ENCODE measurements at regions of chr7 and their contacts with region 1.

Region 1: DNA sequence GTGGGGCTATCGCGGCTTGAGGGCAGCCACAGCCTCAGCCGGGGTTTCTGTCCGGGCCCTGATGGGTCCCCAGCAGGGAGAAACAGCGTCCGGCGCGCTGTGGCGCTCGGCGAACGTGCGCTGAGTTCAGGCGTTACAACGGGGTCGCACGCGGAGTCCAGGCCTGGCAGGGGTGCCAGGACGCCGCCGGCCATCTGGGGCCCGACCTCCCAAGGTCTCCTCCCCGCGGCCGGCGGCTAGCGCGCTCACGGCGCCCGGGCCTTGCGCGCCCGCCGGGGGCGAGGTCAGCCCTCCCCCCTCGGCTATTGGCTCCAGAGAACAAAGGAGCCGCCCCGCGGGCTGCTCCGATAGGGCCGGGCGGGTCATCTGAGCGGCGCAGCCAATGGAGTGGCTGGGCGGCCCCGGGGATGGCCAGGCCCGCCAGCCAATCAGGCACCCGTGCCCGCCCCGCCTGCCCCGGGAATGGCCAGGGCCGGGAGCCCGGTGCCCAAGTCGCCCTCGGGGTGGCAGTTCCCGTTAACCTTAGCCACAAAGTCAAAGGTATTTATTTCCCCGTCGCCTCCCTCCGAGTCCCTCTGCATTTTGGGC is at the start of gene ZNF775:
- DNase-seq: peak; percentile 98 to 100 (median 100)
- ATAC-seq: peak; percentile 98
- H3K4me3 ChIP-seq: peak within 1 kb of the TSS; percentile 96
- H3K27ac ChIP-seq: peak within 1 kb of the TSS; percentile 73
- H3K4me1 ChIP-seq: peaks cover 34 to 54% of the 10 kb centered on the region in 2 experiments
- H3K27me3 ChIP-seq: no peaks in the 10 kb centered on the region
- CTCF ChIP-seq: peak in 2 of 3 experiments; percentile 9 to 14; a peak in 1 of 6 replicates
- EP300 ChIP-seq: no peak
- POLR2A ChIP-seq: peak; percentile 93
- RAD21 ChIP-seq: peak; percentile 3 to 6; a peak in 1 of 4 replicates
- polyA plus RNA-seq, gene ZNF775: 0.04 to 0.20 TPM

Region 2: DNA sequence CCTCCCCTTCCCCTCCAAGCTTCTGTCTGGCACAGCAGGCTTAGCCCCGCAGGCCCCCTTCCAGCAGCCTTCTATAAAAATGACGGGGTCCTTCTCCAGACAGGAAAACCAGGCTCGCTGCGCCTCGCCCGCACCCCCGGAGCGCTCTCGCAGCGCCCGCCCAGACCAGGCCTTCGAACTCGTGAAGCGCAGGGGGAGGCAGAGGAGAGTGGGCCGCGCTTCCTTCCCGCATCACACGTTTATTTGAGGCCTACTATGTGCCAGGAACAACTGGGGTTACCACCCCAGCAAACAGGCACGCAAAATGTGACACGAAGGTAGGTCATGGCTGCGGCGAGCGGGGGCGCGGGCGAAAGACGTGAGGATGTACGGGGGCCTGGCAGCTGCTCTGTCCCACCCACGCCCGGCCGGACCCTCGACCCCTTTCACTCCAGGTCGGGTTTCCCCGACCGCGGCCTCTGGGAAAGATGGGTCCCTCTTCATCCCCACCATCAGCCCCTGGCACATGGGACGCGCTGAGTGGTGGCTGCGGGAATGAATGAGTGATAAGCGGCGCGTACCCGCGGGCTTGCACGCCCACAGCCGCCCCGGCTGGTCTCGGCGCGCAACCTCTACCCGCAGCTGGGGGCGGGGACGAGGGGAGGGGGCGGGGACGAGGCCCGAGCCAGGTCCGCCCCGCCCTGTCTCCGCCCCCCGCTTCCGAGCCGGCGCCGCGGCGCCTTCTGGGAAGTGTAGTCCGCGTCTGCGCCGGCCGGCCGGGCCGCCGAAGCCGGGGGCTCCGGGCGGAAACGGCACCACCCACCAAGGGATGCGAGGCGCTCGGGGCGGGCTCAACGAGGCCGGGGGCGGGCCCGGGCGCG is 664.7 kb before region 1 on chr7:
- CTCF ChIA-PET with region 1: no interaction called
- POLR2A ChIA-PET with region 1: no interaction called
- in situ Hi-C with region 1: no loop called
- intact Hi-C with region 1: loop called (anchors 2 kb)
- DNase-seq: peak; percentile 98 to 100 (median 100)
- ATAC-seq: peak; percentile 89
- H3K4me3 ChIP-seq: peak overlapping the region; percentile 60
- H3K27ac ChIP-seq: peak overlapping the region; percentile 46
- H3K4me1 ChIP-seq: peaks cover 31 to 50% of the 10 kb centered on the region in 2 experiments
- H3K27me3 ChIP-seq: no peaks in the 10 kb centered on the region
- CTCF ChIP-seq: no peak
- EP300 ChIP-seq: no peak
- POLR2A ChIP-seq: no peak; the same call in 1 of the 2 replicates
- RAD21 ChIP-seq: no peak

Region 3: GRCh38 chr7:150356265-150356897 is 22.6 kb before region 1 on chr7:
- CTCF ChIA-PET with region 1: interaction called, 3 read pairs
- POLR2A ChIA-PET with region 1: interaction called, 3 read pairs
- in situ Hi-C with region 1: no loop called
- intact Hi-C with region 1: loop called (anchors 2 kb)
- DNase-seq: peak; percentile 69 to 76 (median 70)
- ATAC-seq: peak; percentile 52
- H3K4me3 ChIP-seq: no peak overlapping the region
- H3K27ac ChIP-seq: no peak overlapping the region
- H3K4me1 ChIP-seq: peaks cover 30 to 34% of the 10 kb centered on the region in 2 experiments; a peak in 4 of 5 replicates
- H3K27me3 ChIP-seq: no peaks in the 10 kb centered on the region; a peak in 1 of 5 replicates
- CTCF ChIP-seq: peak; percentile 79 to 89 (median 89)
- EP300 ChIP-seq: no peak
- POLR2A ChIP-seq: no peak
- RAD21 ChIP-seq: peak; percentile 55 to 66

Region 4: GRCh38 chr7:150368096-150368883 is 10.7 kb before region 1 on chr7 and contains the start of gene REPIN1:
- CTCF ChIA-PET with region 1: no interaction called
- POLR2A ChIA-PET with region 1: interaction called, 30 read pairs
- in situ Hi-C with region 1: no loop called
- intact Hi-C with region 1: no loop called
- DNase-seq: peak; percentile 97 to 99 (median 98)
- ATAC-seq: peak; percentile 76
- H3K4me3 ChIP-seq: peak within 1 kb of the TSS; percentile 79
- H3K27ac ChIP-seq: peak within 1 kb of the TSS; percentile 97
- H3K4me1 ChIP-seq: peaks cover 45 to 51% of the 10 kb centered on the region in 2 experiments
- H3K27me3 ChIP-seq: no peaks in the 10 kb centered on the region
- CTCF ChIP-seq: 0 out of 6 replicates have a peak, but pooled peaks of 1 of the 3 experiments have one; percentile 1
- EP300 ChIP-seq: peak; percentile 56
- POLR2A ChIP-seq: peak; percentile 74
- RAD21 ChIP-seq: peak in 1 of 2 experiments; percentile 5; a peak in 1 of 4 replicates
- polyA plus RNA-seq, gene REPIN1: 8.1 to 11.0 TPM

Region 5: DNA sequence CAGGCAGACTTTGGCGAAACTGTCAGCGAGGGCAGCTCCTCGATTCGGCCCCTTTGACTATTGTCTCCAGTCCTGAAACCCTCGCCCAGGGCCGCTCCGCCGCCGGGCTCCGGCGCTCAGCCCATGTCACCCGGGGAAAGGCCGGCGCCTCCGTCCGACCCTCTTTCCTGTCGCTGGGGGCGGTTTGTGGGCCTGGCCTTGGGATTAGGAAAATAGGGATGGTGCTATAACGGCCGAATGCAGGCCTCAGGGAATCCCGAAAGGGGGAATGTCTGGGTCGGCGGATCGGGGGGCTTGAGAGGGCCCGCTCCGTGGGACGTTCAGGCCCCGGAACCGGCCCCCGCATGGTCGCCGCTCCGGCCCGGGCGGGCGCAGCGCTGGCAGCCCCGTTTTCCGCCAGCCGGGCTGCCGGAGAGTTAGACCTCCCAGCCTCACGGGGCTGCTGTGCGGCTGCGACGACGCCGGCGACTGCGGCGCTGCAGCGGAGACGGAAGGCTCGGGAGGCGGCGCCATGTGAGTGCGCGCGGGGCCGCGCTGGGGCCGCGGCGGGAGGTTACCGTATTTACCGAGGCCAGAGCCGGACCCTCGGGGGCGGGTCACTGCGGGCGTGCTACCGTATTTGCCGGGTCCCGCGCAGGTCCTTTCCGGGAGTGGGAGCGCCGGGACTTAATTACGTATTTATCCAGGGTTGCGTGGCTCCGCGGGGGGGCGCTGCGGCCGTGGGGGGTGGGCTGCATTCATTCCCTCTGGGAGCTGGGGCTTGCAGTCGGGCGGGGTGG is 26.0 kb after region 1 on chr7:
- CTCF ChIA-PET with region 1: no interaction called
- POLR2A ChIA-PET with region 1: interaction called, 7 read pairs
- in situ Hi-C with region 1: no loop called
- intact Hi-C with region 1: loop called (anchors 1 kb)
- DNase-seq: peak; percentile 96 to 98 (median 97)
- ATAC-seq: peak; percentile 87
- H3K4me3 ChIP-seq: peak overlapping the region; percentile 65
- H3K27ac ChIP-seq: peak overlapping the region; percentile 95
- H3K4me1 ChIP-seq: peaks cover 55 to 77% of the 10 kb centered on the region in 2 experiments
- H3K27me3 ChIP-seq: no peaks in the 10 kb centered on the region
- CTCF ChIP-seq: peak; percentile 42 to 66 (median 51)
- EP300 ChIP-seq: peak; percentile 77
- POLR2A ChIP-seq: peak; percentile 84
- RAD21 ChIP-seq: peak in 1 of 2 experiments; percentile 29; a peak in 2 of 4 replicates

Region 6: DNA sequence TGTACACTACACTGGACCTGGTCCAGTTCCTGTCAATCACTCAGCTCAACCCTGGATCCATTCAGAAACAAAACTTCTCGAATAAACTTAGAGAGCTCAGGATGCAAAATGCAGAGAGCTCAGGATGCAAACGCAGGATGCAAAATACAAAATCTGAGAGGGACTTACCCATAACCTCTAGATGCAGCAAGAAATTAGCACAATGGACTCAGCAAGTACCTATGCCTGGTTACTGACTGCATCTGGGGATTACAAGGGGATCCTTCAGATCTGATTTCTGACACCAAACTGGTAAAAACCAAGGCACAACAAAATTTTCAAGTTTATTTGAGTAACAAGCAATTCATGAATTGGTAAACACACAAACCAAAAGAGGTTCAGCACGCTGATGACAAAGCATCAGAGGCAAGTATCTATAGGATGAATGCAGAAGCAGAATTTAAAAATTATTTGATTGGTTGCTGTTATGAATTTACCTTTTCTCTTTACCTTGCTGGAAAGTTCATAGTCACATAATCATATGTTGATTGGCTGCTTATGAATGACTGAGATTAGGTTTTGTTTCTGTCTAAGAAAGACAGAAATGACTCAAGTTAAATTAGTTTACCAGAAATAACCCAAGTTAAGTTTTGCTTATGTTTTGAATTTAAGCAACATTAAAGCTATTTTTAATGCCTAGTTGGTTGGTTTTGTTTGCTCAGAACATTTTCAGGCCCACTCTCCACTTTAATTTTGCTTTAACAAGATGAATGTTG is 241.8 kb after region 1 on chr7:
- CTCF ChIA-PET with region 1: no interaction called
- POLR2A ChIA-PET with region 1: no interaction called
- in situ Hi-C with region 1: no loop called
- intact Hi-C with region 1: no loop called
- DNase-seq: no peak
- ATAC-seq: no peak
- H3K4me3 ChIP-seq: no peak overlapping the region
- H3K27ac ChIP-seq: no peak overlapping the region
- H3K4me1 ChIP-seq: no peaks in the 10 kb centered on the region
- H3K27me3 ChIP-seq: no peaks in the 10 kb centered on the region; a peak in 1 of 5 replicates
- CTCF ChIP-seq: no peak
- EP300 ChIP-seq: no peak
- POLR2A ChIP-seq: no peak
- RAD21 ChIP-seq: no peak

Region 7: DNA sequence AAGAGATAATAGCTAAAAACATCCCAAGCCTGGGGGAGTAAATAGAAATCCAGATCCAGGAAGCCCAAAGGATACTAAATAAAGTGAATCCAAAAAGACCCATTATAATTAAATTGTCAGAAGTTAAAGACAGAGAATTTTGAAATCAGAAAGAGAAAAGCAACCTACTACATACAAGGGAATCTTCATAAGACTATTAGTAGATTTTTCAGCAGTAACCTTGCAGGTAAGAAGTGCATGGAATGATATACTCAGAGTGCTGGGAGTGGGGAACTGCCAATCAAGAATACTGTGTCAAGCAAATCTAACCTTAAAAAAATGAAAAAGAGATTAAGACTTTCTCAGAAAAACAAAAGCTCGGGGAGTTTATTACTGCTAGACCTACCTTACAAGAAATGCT is 324.3 kb after region 1 on chr7:
- CTCF ChIA-PET with region 1: no interaction called
- POLR2A ChIA-PET with region 1: no interaction called
- in situ Hi-C with region 1: no loop called
- intact Hi-C with region 1: no loop called
- DNase-seq: no peak
- ATAC-seq: no peak
- H3K4me3 ChIP-seq: no peak overlapping the region
- H3K27ac ChIP-seq: no peak overlapping the region
- H3K4me1 ChIP-seq: no peaks in the 10 kb centered on the region
- H3K27me3 ChIP-seq: no peaks in the 10 kb centered on the region
- CTCF ChIP-seq: no peak
- EP300 ChIP-seq: no peak
- POLR2A ChIP-seq: no peak
- RAD21 ChIP-seq: no peak

Region 8: GRCh38 chr7:150974468-150975391 is 595.8 kb after region 1 on chr7:
- CTCF ChIA-PET with region 1: no interaction called
- POLR2A ChIA-PET with region 1: no interaction called
- in situ Hi-C with region 1: no loop called
- intact Hi-C with region 1: no loop called
- DNase-seq: peak; percentile 89 to 98 (median 96)
- ATAC-seq: peak; percentile 72
- H3K4me3 ChIP-seq: peak overlapping the region; percentile 54
- H3K27ac ChIP-seq: peak overlapping the region; percentile 60
- H3K4me1 ChIP-seq: peaks cover 50 to 86% of the 10 kb centered on the region in 2 experiments
- H3K27me3 ChIP-seq: peaks cover 0 to 1% of the 10 kb centered on the region in 2 experiments; a peak in 2 of 5 replicates
- CTCF ChIP-seq: peak; percentile 55 to 65 (median 61)
- EP300 ChIP-seq: no peak
- POLR2A ChIP-seq: peak; percentile 75
- RAD21 ChIP-seq: peak; percentile 32 to 42; a peak in 2 of 4 replicates

Region 9: DNA sequence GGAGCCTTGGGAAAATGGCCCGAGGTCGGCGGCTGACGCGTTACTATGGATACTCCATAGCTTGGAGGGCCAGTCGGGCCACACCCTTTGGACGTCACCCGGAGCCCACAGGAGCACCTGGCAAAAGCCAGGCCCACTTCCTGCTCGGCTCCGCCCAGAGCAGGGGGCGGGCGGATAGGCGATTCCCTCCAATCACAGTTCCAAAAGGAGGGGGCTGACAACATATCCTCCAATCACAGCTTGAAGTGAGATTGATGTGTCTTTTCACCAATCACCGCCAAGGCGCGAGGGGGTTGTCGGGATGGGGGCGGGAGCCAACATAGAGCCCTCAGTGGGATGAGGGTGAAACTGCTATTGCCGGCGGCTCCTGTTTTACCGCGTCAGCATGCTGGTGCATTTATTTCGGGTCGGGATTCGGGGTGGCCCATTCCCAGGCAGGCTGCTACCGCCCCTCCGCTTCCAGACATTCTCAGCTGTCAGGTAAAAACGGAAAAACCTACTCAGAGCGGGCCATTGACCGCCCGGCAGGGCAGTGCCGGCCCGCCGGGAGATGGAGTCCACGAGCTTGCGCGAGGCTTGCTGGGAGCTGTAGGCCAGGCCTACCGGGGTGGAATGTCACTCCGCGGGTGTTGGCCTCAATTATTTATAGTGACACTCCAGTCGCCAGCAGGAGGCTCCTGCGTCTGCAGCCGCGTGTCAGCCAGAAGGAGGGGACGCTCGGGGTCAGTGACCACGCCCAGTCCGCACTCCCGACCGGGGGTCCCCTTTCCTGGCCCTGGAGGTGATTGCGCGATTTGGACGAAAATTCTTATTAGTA is 649.4 kb after region 1 on chr7 and contains the start of gene ABCB8:
- CTCF ChIA-PET with region 1: no interaction called
- POLR2A ChIA-PET with region 1: no interaction called
- in situ Hi-C with region 1: no loop called
- intact Hi-C with region 1: no loop called
- DNase-seq: peak; percentile 100
- ATAC-seq: peak; percentile 93
- H3K4me3 ChIP-seq: peak within 1 kb of the TSS; percentile 58
- H3K27ac ChIP-seq: peak within 1 kb of the TSS; percentile 73
- H3K4me1 ChIP-seq: peaks cover 35 to 56% of the 10 kb centered on the region in 2 experiments
- H3K27me3 ChIP-seq: no peaks in the 10 kb centered on the region
- CTCF ChIP-seq: peak; percentile 92 to 96 (median 93)
- EP300 ChIP-seq: peak; percentile 50; the same call in 1 of the 2 replicates
- POLR2A ChIP-seq: peak; percentile 88
- RAD21 ChIP-seq: peak; percentile 85 to 89
- polyA plus RNA-seq, gene ABCB8: 7.6 to 9.2 TPM

Measured in K562 (cell line).